Endothelial cell of umbilical vein (primary cell): ENCODE measurements at regions of chr3 and their contacts with region 1.

Region 1: GRCh38 chr3:4350789-4351163 is 47.6 kb downstream of the SETMAR start:
- DNase-seq: no peak
- H3K4me3 ChIP-seq: peak overlapping the region; percentile 26 to 75 (median 49)
- H3K27ac ChIP-seq: peak overlapping the region; percentile 86
- H3K4me1 ChIP-seq: peaks cover 13% of the 10 kb centered on the region
- H3K27me3 ChIP-seq: no peaks in the 10 kb centered on the region
- CTCF ChIP-seq: peak; percentile 48 to 67
- POLR2A ChIP-seq: no peak

Region 2: DNA sequence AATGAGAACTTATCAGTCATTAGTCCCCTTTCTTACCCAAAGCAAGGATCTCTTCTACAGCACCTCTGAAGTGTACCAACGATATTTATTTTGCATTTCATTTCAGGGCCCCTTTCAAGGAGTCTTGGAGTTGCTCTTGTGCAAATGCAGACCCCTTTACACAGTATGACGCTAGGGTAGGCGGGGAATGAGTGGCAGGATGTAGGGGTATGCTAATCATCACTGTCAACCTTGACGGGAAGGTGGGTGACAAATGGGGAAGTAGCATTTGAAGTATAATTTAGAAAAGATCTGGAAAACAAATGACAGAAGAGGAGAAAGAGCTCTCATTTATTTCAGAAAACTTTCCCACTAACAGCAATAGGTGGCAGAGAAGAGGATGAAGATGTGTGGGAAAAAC is 457.2 kb before region 1 on chr3:
- CTCF ChIA-PET with region 1: no interaction called
- POLR2A ChIA-PET with region 1: no interaction called
- dilution Hi-C with region 1: no loop called
- intact Hi-C with region 1: no loop called
- DNase-seq: no peak
- H3K4me3 ChIP-seq: no peak overlapping the region
- H3K27ac ChIP-seq: no peak overlapping the region
- H3K4me1 ChIP-seq: no peaks in the 10 kb centered on the region
- H3K27me3 ChIP-seq: no peaks in the 10 kb centered on the region
- CTCF ChIP-seq: no peak
- POLR2A ChIP-seq: no peak

Region 3: DNA sequence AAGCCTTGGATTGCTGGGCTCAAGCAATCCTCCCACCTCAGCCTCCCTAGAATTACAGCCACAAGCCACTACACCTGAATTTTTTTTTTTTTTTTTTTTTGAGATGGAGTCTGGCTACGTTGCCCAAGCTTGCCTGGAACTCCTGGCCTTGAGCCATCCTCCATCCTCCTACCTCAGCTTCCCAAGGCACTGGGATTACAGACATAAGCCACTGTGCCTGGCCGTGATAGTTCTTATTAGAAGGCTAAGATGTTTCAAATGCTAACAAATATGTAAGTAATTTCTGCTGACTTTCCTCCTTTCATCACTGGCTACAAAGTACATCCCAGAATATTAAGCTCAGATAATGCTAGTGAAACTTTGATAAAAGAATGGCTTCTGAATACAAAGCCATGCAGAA is 53.3 kb before region 1 on chr3:
- CTCF ChIA-PET with region 1: no interaction called
- POLR2A ChIA-PET with region 1: no interaction called
- dilution Hi-C with region 1: no loop called
- intact Hi-C with region 1: no loop called
- DNase-seq: no peak
- H3K4me3 ChIP-seq: no peak overlapping the region
- H3K27ac ChIP-seq: no peak overlapping the region
- H3K4me1 ChIP-seq: no peaks in the 10 kb centered on the region
- H3K27me3 ChIP-seq: no peaks in the 10 kb centered on the region
- CTCF ChIP-seq: no peak
- POLR2A ChIP-seq: no peak

Region 4: GRCh38 chr3:4314688-4315087 is 36.1 kb before region 1 on chr3:
- CTCF ChIA-PET with region 1: interaction called, 13 read pairs
- POLR2A ChIA-PET with region 1: no interaction called
- dilution Hi-C with region 1: no loop called
- intact Hi-C with region 1: no loop called
- DNase-seq: no peak
- H3K4me3 ChIP-seq: no peak overlapping the region
- H3K27ac ChIP-seq: no peak overlapping the region
- H3K4me1 ChIP-seq: peaks cover 14% of the 10 kb centered on the region
- H3K27me3 ChIP-seq: no peaks in the 10 kb centered on the region
- CTCF ChIP-seq: peak; percentile 8 to 11
- POLR2A ChIP-seq: no peak

Region 5: DNA sequence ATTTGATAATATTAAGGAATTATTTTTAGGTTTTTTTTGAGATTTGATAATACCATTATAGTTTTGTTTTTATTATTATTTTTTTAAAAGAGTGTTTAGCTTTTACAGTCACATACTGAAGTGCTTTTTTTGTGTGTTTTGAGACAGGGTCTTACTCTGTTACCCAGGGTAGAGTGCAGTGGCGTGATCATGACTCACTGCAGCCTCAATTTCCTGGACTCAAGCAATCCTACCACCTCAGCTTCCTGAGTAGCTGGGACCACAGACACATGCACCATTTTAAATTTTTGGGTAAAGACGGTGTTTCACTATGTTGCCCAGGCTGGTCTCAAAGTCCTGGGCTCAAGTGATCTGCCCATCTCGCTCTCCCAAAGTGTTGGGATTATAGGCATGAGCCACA is 43.3 kb after region 1 on chr3:
- CTCF ChIA-PET with region 1: interaction called, 20 read pairs
- POLR2A ChIA-PET with region 1: no interaction called
- dilution Hi-C with region 1: no loop called
- intact Hi-C with region 1: loop called (anchors 1 kb)
- DNase-seq: peak; percentile 84
- H3K4me3 ChIP-seq: no peak overlapping the region
- H3K27ac ChIP-seq: peak overlapping the region; percentile 81
- H3K4me1 ChIP-seq: peaks cover 46% of the 10 kb centered on the region
- H3K27me3 ChIP-seq: no peaks in the 10 kb centered on the region
- CTCF ChIP-seq: no peak
- POLR2A ChIP-seq: no peak

Region 6: DNA sequence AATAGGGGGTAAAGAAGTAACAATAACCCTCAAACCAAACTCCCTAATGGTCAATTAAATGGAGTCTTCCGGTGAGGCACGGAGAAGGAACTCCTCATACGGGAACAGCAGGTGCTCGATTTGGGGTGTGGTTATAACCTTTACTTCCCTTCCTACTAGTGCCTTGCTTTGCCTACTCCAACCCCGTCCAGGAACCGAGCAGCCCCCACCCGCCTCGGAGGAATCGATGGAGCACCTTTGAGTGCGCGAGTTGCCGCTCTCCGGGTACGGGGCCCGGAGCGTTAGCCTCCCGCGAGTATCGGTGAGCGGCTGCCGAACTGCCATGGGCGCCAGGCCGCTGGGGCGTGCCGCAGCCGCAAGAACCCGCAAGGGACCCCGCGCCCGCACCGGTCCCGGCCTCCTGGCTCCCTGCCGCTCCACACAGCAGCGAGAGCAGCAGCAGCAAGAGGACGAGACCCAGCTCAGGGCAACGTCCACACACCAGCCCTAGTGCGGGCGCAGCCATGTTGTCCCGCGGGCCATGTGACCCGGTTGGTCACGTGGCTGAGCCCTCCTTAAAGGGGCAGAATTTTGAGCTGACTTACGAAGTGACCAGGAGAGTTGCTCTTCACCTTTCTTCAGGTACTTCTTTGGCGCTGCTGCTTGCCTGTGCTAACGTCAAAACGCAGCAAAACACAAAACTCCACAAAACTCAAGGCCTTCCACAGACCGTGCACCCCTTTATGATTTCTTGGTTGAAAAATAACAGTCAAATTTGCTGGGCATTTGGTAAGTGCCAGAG is 116.2 kb after region 1 on chr3 and contains the start of gene SUMF1:
- CTCF ChIA-PET with region 1: interaction called, 36 read pairs
- POLR2A ChIA-PET with region 1: interaction called, 3 read pairs
- dilution Hi-C with region 1: no loop called
- intact Hi-C with region 1: loop called (anchors 1 kb)
- DNase-seq: peak; percentile 80
- H3K4me3 ChIP-seq: peak within 1 kb of the TSS; percentile 56 to 86 (median 83)
- H3K27ac ChIP-seq: peak within 1 kb of the TSS; percentile 51
- H3K4me1 ChIP-seq: peaks cover 4% of the 10 kb centered on the region
- H3K27me3 ChIP-seq: peaks cover 0 to 3% of the 10 kb centered on the region in 2 experiments
- CTCF ChIP-seq: no peak
- POLR2A ChIP-seq: peak; percentile 85
- total RNA-seq, gene SUMF1: 26.6 and 31.5 TPM in 2 replicates

Region 7: GRCh38 chr3:4512895-4513616 is 162.3 kb after region 1 on chr3:
- CTCF ChIA-PET with region 1: interaction called, 18 read pairs
- POLR2A ChIA-PET with region 1: interaction called, 4 read pairs
- dilution Hi-C with region 1: no loop called
- intact Hi-C with region 1: no loop called
- DNase-seq: no peak
- H3K4me3 ChIP-seq: no peak overlapping the region
- H3K27ac ChIP-seq: no peak overlapping the region
- H3K4me1 ChIP-seq: no peaks in the 10 kb centered on the region
- H3K27me3 ChIP-seq: no peaks in the 10 kb centered on the region
- CTCF ChIP-seq: no peak
- POLR2A ChIP-seq: no peak

Region 8: DNA sequence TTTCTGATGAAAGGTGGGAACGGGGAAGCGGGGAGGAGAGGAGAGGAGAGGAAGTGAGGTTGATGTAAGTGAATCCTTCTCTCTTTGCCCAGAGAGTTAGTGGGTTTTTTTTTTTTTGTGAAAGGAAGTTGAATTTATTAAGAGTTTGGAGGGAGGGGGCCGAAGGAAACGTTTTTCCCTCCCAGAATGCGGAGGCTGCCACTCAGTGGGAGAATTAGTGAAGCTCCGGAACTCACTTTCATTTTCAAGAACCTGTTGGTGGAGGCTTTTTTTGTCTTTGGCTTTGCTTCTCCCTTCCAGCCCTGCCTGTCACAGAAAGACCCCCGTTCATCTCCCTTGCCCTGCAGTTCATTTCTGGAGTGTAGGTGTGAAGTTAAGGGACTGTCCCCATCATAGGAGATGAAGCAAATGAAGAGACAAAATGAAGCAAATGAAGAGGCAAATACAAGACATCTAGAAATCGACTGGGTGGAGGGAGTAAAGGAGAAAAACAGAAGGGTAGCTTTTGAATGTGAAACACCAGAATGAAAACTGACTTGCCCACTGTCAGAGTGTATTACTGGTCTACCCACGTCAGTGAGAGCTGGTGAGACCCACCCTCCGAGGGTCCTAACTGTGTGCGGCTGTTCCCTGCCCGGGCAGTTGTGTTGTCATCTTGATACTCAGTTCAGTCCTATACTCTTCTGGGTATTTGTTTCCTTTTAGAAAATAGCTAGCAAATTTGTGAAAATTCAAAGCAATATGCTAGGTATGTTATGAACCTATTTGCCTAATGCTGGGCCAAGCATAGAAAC is 233.9 kb after region 1 on chr3:
- CTCF ChIA-PET with region 1: interaction called, 44 read pairs
- POLR2A ChIA-PET with region 1: no interaction called
- dilution Hi-C with region 1: no loop called
- intact Hi-C with region 1: loop called (anchors 1 kb)
- DNase-seq: peak; percentile 18
- H3K4me3 ChIP-seq: peak overlapping the region in 1 of 3 experiments; percentile 13
- H3K27ac ChIP-seq: no peak overlapping the region
- H3K4me1 ChIP-seq: no peaks in the 10 kb centered on the region
- H3K27me3 ChIP-seq: peaks cover 1 to 4% of the 10 kb centered on the region in 2 experiments
- CTCF ChIP-seq: no peak
- POLR2A ChIP-seq: no peak